Endothelial cell of umbilical vein (primary cell): ENCODE measurements at regions of chr6 and their contacts with region 1.

Region 1: GRCh38 chr6:17987576-17988421 is at the start of gene KIF13A:
- DNase-seq: peak; percentile 83
- H3K4me3 ChIP-seq: peak within 1 kb of the TSS; percentile 49 to 93 (median 84)
- H3K27ac ChIP-seq: peak within 1 kb of the TSS; percentile 68
- H3K4me1 ChIP-seq: peaks cover 20% of the 10 kb centered on the region
- H3K27me3 ChIP-seq: no peaks in the 10 kb centered on the region
- CTCF ChIP-seq: peak in 1 of 2 donors; percentile 23
- POLR2A ChIP-seq: peak; percentile 53
- total RNA-seq, gene KIF13A: 55.5 and 65.8 TPM in 2 replicates

Region 2: DNA sequence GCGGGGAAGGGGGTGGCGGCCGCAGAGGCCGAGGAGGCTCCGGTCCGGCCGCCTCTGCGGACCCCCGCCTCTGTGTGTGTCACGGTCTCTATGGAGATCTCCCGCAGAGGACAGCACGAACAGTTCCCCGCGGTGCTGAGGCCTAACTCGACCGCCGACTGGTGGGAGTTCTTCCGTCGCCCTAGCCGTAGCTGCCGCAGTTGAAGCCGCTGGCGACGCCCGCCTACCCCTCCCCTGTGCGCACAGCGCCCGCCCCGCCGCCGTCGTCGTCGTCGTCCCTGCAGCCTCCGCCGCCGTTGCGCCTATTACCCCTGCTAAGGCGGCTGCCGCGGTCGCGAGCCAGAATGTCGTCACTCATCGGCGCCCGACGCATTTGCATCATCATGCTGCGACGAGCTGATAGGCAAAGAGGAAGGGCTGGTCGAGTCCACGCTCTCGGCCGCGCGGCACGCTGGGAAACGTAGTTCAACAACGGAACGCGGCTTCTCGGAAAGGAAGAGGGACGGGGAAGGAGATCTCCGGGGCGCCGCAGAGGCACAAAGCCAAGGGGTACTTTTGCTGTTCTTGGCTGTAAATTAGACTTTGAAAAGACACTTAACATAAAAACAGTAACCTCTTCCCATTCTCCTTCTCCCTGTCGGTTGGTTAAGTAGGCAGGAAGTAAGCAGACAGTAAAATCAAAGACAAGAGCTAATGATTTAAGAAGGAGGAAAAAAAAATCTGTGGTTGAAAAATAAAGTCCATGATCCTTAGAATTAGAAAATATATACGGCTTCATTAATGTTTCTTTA is 281.0 kb before region 1 on chr6 and contains the start of gene NUP153:
- CTCF ChIA-PET with region 1: no interaction called
- POLR2A ChIA-PET with region 1: no interaction called
- dilution Hi-C with region 1: no loop called
- intact Hi-C with region 1: loop called (anchors 2 kb)
- DNase-seq: peak; percentile 99
- H3K4me3 ChIP-seq: peak within 1 kb of the TSS; percentile 95 to 99 (median 99)
- H3K27ac ChIP-seq: peak within 1 kb of the TSS; percentile 99
- H3K4me1 ChIP-seq: peaks cover 36% of the 10 kb centered on the region
- H3K27me3 ChIP-seq: no peaks in the 10 kb centered on the region
- CTCF ChIP-seq: no peak
- POLR2A ChIP-seq: peak; percentile 83
- total RNA-seq, gene NUP153: 47.7 and 51.0 TPM in 2 replicates

Region 3: GRCh38 chr6:17831135-17831534 is 156.7 kb before region 1 on chr6:
- CTCF ChIA-PET with region 1: no interaction called
- POLR2A ChIA-PET with region 1: no interaction called
- dilution Hi-C with region 1: no loop called
- intact Hi-C with region 1: loop called (anchors 1 kb)
- DNase-seq: peak; percentile 98
- H3K4me3 ChIP-seq: no peak overlapping the region
- H3K27ac ChIP-seq: peak overlapping the region; percentile 96
- H3K4me1 ChIP-seq: peaks cover 23% of the 10 kb centered on the region
- H3K27me3 ChIP-seq: no peaks in the 10 kb centered on the region
- CTCF ChIP-seq: peak in 1 of 2 donors; percentile 7
- POLR2A ChIP-seq: peak; percentile 49

Region 4: DNA sequence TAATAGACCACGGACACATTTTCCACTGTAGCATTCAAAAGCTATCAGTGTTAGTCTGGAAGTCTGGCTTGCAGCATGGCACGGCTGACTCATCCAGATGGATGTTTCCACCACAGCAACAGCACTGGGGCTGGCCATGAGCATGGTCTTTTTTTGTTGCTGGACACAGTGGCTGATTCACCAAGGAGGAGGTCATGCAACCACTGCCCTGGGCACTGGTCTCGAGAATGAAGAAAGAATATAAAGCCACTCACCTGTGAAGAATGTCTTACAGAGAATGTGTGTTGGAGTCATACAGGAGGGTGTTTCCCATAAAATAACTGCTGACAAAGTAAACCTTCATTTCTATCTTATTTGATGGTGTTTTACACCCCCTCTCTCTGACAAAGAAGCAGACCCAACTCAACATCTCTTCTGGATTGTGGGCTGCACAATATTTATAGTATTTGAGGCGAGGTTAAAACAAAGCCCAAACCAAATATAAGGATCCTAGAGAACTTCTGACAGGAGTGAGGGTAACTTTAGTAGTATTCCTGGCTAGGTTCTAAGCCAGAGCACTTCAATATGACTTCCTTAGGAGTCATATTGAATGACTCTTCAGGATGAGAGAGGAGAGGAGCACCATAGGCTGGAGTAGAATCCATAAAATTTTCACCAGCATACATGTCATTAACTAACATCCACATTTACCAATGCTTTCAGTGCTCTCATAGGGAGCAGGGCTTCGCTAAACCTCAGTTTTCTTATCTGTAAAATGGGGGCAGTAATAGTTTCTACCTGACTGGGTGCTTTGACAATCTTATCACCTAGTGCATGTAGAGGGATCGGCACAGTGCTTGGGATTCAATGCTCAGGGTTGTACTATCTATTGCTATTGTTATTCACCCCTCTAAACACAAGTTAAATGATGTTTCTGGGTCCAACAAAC is 121.7 kb before region 1 on chr6:
- CTCF ChIA-PET with region 1: interaction called, 5 read pairs
- POLR2A ChIA-PET with region 1: no interaction called
- dilution Hi-C with region 1: no loop called
- intact Hi-C with region 1: loop called (anchors 5 kb)
- DNase-seq: peak; percentile 97
- H3K4me3 ChIP-seq: no peak overlapping the region
- H3K27ac ChIP-seq: peak overlapping the region; percentile 89
- H3K4me1 ChIP-seq: peaks cover 67% of the 10 kb centered on the region
- H3K27me3 ChIP-seq: no peaks in the 10 kb centered on the region
- CTCF ChIP-seq: no peak
- POLR2A ChIP-seq: no peak

Region 5: GRCh38 chr6:18053078-18053477 is 65.3 kb after region 1 on chr6:
- CTCF ChIA-PET with region 1: no interaction called
- POLR2A ChIA-PET with region 1: no interaction called
- dilution Hi-C with region 1: no loop called
- intact Hi-C with region 1: no loop called
- DNase-seq: no peak
- H3K4me3 ChIP-seq: no peak overlapping the region
- H3K27ac ChIP-seq: no peak overlapping the region
- H3K4me1 ChIP-seq: no peaks in the 10 kb centered on the region
- H3K27me3 ChIP-seq: no peaks in the 10 kb centered on the region
- CTCF ChIP-seq: no peak
- POLR2A ChIP-seq: no peak

Region 6: DNA sequence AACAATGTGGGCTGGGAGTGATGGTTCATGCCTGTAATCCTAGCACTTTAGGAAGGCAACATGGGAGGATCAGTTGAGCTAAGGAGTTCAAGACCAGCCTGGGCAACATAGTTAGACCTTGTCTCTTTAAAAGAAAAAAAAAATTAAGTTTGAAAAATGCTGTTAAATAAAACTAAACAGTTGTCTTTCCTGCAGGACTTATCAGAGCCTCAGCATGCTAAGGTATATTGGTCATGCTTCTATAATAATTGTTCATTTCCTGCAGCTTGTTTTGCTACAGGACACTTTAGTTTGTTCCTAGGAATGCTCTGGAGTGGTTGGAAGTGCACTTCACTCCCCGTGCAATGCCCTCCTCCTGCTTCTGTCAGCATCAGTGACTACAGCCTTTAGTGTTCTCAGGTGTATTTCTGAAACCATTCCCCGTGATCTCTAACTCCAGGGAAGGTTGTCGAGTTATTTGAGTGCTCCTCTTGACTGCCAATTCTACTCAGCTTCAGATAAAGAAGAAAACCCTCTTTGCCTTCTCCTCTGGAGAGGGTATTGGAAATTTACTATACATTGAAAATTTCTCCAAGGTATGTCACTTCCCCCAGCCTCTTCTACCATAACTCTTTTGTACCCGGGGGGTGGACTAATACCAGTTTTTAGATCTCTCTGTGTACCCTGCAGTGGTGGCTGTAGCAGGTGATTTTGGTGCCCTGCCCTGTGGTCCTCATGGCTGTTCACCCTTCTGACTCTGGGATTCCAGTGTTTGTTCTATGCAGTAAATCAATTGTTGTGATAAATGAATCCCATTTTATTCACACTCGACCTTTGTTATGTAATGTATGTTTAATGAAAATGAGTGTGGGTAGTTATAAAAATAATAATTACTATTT is 100.9 kb after region 1 on chr6:
- CTCF ChIA-PET with region 1: no interaction called
- POLR2A ChIA-PET with region 1: no interaction called
- dilution Hi-C with region 1: no loop called
- intact Hi-C with region 1: no loop called
- DNase-seq: no peak
- H3K4me3 ChIP-seq: no peak overlapping the region
- H3K27ac ChIP-seq: no peak overlapping the region
- H3K4me1 ChIP-seq: no peaks in the 10 kb centered on the region
- H3K27me3 ChIP-seq: no peaks in the 10 kb centered on the region
- CTCF ChIP-seq: no peak
- POLR2A ChIP-seq: no peak

Region 7: GRCh38 chr6:18101271-18101670 is 113.5 kb after region 1 on chr6:
- CTCF ChIA-PET with region 1: no interaction called
- POLR2A ChIA-PET with region 1: no interaction called
- dilution Hi-C with region 1: no loop called
- intact Hi-C with region 1: no loop called
- DNase-seq: no peak
- H3K4me3 ChIP-seq: no peak overlapping the region
- H3K27ac ChIP-seq: no peak overlapping the region
- H3K4me1 ChIP-seq: no peaks in the 10 kb centered on the region
- H3K27me3 ChIP-seq: no peaks in the 10 kb centered on the region
- CTCF ChIP-seq: no peak
- POLR2A ChIP-seq: no peak

Region 8: GRCh38 chr6:18122124-18123093 is 134.6 kb after region 1 on chr6 and contains the start of gene NHLRC1:
- CTCF ChIA-PET with region 1: interaction called, 3 read pairs
- POLR2A ChIA-PET with region 1: no interaction called
- dilution Hi-C with region 1: no loop called
- intact Hi-C with region 1: loop called (anchors 1 kb)
- DNase-seq: peak; percentile 92
- H3K4me3 ChIP-seq: peak within 1 kb of the TSS in 1 of 3 experiments; percentile 35
- H3K27ac ChIP-seq: no peak within 1 kb of the TSS
- H3K4me1 ChIP-seq: peaks cover 5% of the 10 kb centered on the region
- H3K27me3 ChIP-seq: no peaks in the 10 kb centered on the region
- CTCF ChIP-seq: peak; percentile 94 to 97
- POLR2A ChIP-seq: peak; percentile 65
- total RNA-seq, gene NHLRC1: 2.2 and 2.3 TPM in 2 replicates